Ovary (tissue), 10 donors: ENCODE measurements at regions of chr3 and their contacts with region 1.

Region 1: DNA sequence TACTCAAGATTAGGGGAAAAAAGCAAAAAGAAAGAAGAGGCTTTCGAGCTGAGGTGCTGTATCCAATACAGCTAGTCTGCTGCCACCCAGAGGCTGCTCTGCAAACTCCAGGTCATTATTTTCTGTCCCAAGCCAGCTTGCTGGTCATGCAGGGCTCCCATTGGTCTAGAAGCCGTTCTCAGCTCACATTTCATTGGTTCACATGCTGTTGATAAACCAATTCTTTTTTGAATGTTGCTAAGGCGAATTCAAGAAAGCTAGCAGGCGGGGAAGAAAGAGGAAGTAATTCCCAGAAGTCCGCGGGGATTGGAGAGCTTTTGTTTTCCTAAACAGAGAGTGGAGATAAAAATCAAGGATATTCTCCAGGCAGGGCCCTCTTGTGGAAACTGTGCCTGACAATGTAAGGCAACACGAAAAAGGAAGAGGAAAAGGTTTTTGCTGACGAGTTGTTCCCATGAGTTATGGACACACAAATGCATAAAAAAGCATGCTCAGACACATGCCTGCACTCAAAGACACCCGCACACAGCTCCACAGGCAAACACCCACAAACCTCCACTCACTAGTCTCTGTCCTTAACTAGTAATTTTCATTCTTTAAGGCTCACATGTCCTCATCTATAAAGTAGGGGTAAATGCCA is 33.4 kb downstream of the FSTL1 start:
- DNase-seq: peak; percentile 83 to 94 (median 89)
- H3K4me3 ChIP-seq: peak overlapping the region; percentile 4
- H3K27ac ChIP-seq: no peak overlapping the region
- H3K4me1 ChIP-seq: peaks cover 15% of the 10 kb centered on the region
- H3K27me3 ChIP-seq: no peaks in the 10 kb centered on the region
- CTCF ChIP-seq: peak; percentile 85 to 91 (median 88)
- EP300 ChIP-seq: no peak
- POLR2A ChIP-seq: no peak

Region 2: GRCh38 chr3:120239644-120240043 is 177.7 kb before region 1 on chr3:
- intact Hi-C with region 1: loop called in 1 of 4 experiments (anchors 5 kb)
- DNase-seq: no peak
- H3K4me3 ChIP-seq: no peak overlapping the region
- H3K27ac ChIP-seq: no peak overlapping the region
- H3K4me1 ChIP-seq: no peaks in the 10 kb centered on the region
- H3K27me3 ChIP-seq: no peaks in the 10 kb centered on the region
- CTCF ChIP-seq: no peak
- EP300 ChIP-seq: no peak
- POLR2A ChIP-seq: no peak

Region 3: DNA sequence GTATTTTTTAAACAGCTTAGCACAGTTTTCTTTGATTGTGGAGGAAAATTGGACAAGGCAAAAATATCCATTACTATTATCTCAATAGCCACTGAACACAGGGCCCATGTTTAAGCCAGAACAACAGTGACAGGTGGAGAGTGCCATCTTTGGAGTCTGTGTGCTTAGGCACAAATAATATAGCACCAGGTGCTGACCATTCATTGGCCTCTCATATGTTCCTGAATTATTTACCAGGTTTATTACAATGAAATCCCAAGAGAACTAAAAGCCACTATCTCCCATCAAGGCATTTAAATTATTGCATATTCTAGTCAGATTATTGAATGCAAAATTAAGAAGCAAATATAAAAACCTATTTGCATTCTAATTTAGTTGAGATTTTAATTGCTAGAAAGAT is 172.0 kb before region 1 on chr3:
- intact Hi-C with region 1: loop called in 3 of 4 experiments (anchors 5 kb)
- DNase-seq: no peak
- H3K4me3 ChIP-seq: no peak overlapping the region
- H3K27ac ChIP-seq: no peak overlapping the region
- H3K4me1 ChIP-seq: no peaks in the 10 kb centered on the region
- H3K27me3 ChIP-seq: no peaks in the 10 kb centered on the region
- CTCF ChIP-seq: no peak
- EP300 ChIP-seq: no peak
- POLR2A ChIP-seq: no peak

Region 4: GRCh38 chr3:120348981-120349818 is 68.2 kb before region 1 on chr3 and contains the start of gene LRRC58:
- intact Hi-C with region 1: loop called in 1 of 4 experiments (anchors 10 kb)
- DNase-seq: peak; percentile 90 to 95 (median 91)
- H3K4me3 ChIP-seq: peak within 1 kb of the TSS; percentile 68
- H3K27ac ChIP-seq: peak within 1 kb of the TSS; percentile 91 to 94
- H3K4me1 ChIP-seq: peaks cover 4% of the 10 kb centered on the region
- H3K27me3 ChIP-seq: no peaks in the 10 kb centered on the region
- CTCF ChIP-seq: peak in 2 of 3 donors; percentile 34 to 52
- EP300 ChIP-seq: no peak
- POLR2A ChIP-seq: peak; percentile 89
- total RNA-seq, gene LRRC58: 25.3 to 41.8 (median 33.1) TPM

Region 5: GRCh38 chr3:120450600-120451271 is 33.3 kb after region 1 on chr3 and contains the start of gene FSTL1:
- intact Hi-C with region 1: no loop called
- DNase-seq: peak; percentile 74 to 83 (median 79)
- H3K4me3 ChIP-seq: peak within 1 kb of the TSS; percentile 89
- H3K27ac ChIP-seq: peak within 1 kb of the TSS; percentile 80 to 85
- H3K4me1 ChIP-seq: peaks cover 16% of the 10 kb centered on the region
- H3K27me3 ChIP-seq: no peaks in the 10 kb centered on the region
- CTCF ChIP-seq: no peak
- EP300 ChIP-seq: no peak
- POLR2A ChIP-seq: peak; percentile 65
- total RNA-seq, gene FSTL1: 98.0 to 296 (median 204) TPM